ENCODE measurements at regions of chr9 and their contacts with region 1.

Region 1: DNA sequence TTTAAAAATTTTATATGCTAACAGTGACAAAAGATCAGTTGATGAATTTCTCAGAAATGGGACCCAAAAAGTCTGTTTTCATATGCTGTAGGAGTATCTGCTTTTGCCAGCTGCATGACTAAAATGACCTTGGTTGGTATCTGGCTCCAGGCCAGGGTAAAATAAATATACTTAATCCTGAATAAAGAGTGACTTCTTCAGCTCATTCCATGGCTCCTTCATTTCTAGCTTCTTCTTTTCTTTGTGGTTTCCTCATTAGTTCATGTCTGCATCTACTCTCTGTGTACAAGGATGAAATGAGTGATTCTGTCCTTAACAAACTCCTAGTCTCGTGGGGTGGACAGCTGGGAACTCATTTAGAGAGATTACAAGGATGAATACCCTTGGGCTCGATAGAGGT is 36.0 kb downstream of the RCL1 start:
- DNase-seq: no peak
- ATAC-seq: no peak
- H3K4me3 Mint-ChIP-seq: no peak overlapping the region
- H3K27ac Mint-ChIP-seq: no peak overlapping the region
- H3K4me1 Mint-ChIP-seq: peaks cover 4% of the 10 kb centered on the region
- H3K27me3 Mint-ChIP-seq: no peaks in the 10 kb centered on the region
- CTCF ChIP-seq: no peak

Region 2: GRCh38 chr9:4792572-4793458 is 35.9 kb before region 1 on chr9 and contains the start of gene RCL1:
- CTCF ChIA-PET with region 1: no interaction called
- POLR2A ChIA-PET with region 1: interaction called, 9 read pairs
- intact Hi-C with region 1: loop called (anchors 5 kb)
- DNase-seq: peak; percentile 97
- ATAC-seq: peak; percentile 93
- H3K4me3 Mint-ChIP-seq: peak within 1 kb of the TSS; percentile 97
- H3K27ac Mint-ChIP-seq: peak within 1 kb of the TSS; percentile 96
- H3K4me1 Mint-ChIP-seq: peaks cover 40% of the 10 kb centered on the region
- H3K27me3 Mint-ChIP-seq: peaks cover 2% of the 10 kb centered on the region
- CTCF ChIP-seq: no peak
- total RNA-seq, gene RCL1: 23.9 and 26.0 TPM in 2 replicates

Region 3: DNA sequence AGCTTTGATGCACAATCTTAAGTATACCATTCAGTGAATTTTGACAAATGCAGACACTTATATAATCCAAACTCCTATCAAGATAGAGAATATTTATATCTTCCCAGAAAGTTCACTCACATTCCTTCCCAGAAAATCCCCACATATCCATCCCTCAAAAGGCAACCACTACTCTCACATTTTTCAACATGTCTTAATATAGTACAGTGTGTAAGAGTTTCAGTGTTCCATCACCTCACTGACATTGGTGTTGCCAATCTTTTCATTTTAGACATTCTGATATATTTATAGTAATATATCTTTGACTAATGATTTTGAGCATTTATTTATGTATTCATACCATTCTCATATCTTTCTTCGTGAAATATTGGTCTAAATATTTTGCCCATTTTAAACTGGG is 118.2 kb after region 1 on chr9:
- CTCF ChIA-PET with region 1: no interaction called
- POLR2A ChIA-PET with region 1: no interaction called
- intact Hi-C with region 1: no loop called
- DNase-seq: no peak
- ATAC-seq: no peak
- H3K4me3 Mint-ChIP-seq: no peak overlapping the region
- H3K27ac Mint-ChIP-seq: no peak overlapping the region
- H3K4me1 Mint-ChIP-seq: peaks cover 17% of the 10 kb centered on the region
- H3K27me3 Mint-ChIP-seq: no peaks in the 10 kb centered on the region
- CTCF ChIP-seq: no peak